ENCODE measurements at regions of chr20 and their contacts with region 1.

Region 1: GRCh38 chr20:58131551-58132142 is 96.8 kb downstream of the ANKRD60 start:
- DNase-seq: no peak
- H3K4me3 ChIP-seq: peak overlapping the region in 1 of 2 donors; percentile 13
- H3K27ac ChIP-seq: peak overlapping the region; percentile 77 to 89
- H3K4me1 ChIP-seq: peaks cover 14 to 68% of the 10 kb centered on the region in 2 donors
- H3K27me3 ChIP-seq: no peaks in the 10 kb centered on the region
- CTCF ChIP-seq: no peak

Region 2: GRCh38 chr20:57425150-57426013 is 706.3 kb before region 1 on chr20:
- intact Hi-C with region 1: no loop called
- DNase-seq: no peak
- H3K4me3 ChIP-seq: no peak overlapping the region
- H3K27ac ChIP-seq: no peak overlapping the region
- H3K4me1 ChIP-seq: peaks cover 0 to 11% of the 10 kb centered on the region in 2 donors
- H3K27me3 ChIP-seq: no peaks in the 10 kb centered on the region
- CTCF ChIP-seq: no peak

Region 3: DNA sequence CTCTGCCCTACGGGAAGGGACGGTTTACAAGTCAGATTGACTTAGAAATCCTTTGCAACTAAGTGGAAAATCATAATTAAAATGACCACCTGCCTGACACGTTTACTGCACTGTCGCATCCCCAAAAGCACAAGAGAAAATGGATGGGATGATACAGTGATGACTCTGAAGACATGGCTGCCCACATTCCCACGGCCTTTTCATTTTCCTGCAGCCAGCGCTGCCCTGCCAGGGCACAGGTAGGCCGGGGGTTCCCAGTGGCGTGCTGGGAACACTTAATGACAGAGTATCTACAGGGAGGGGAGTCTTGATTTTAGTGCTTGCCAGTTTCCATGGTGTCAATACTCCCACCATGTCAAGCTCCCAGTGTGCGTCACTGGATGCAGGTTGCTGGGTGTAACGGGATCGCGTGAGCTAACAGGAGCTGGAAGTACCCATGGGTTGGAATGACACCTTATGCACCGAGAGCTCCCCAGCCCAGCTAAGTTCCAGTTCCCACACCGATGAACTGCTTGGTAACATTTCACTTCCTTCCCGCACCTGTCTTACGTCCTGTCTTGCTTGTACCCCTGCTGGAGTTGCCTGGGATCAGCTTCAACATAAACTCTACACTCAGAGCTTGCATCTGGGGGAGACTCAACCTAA is 32.2 kb before region 1 on chr20:
- intact Hi-C with region 1: no loop called
- DNase-seq: no peak
- H3K4me3 ChIP-seq: no peak overlapping the region
- H3K27ac ChIP-seq: no peak overlapping the region
- H3K4me1 ChIP-seq: no peaks in the 10 kb centered on the region
- H3K27me3 ChIP-seq: no peaks in the 10 kb centered on the region
- CTCF ChIP-seq: no peak

Region 4: GRCh38 chr20:58112017-58112781 is 19.4 kb before region 1 on chr20:
- intact Hi-C with region 1: loop called (anchors 2 kb)
- DNase-seq: no peak
- H3K4me3 ChIP-seq: no peak overlapping the region
- H3K27ac ChIP-seq: peak overlapping the region; percentile 35 to 63
- H3K4me1 ChIP-seq: peaks cover 3 to 14% of the 10 kb centered on the region in 2 donors
- H3K27me3 ChIP-seq: no peaks in the 10 kb centered on the region
- CTCF ChIP-seq: no peak

Region 5: DNA sequence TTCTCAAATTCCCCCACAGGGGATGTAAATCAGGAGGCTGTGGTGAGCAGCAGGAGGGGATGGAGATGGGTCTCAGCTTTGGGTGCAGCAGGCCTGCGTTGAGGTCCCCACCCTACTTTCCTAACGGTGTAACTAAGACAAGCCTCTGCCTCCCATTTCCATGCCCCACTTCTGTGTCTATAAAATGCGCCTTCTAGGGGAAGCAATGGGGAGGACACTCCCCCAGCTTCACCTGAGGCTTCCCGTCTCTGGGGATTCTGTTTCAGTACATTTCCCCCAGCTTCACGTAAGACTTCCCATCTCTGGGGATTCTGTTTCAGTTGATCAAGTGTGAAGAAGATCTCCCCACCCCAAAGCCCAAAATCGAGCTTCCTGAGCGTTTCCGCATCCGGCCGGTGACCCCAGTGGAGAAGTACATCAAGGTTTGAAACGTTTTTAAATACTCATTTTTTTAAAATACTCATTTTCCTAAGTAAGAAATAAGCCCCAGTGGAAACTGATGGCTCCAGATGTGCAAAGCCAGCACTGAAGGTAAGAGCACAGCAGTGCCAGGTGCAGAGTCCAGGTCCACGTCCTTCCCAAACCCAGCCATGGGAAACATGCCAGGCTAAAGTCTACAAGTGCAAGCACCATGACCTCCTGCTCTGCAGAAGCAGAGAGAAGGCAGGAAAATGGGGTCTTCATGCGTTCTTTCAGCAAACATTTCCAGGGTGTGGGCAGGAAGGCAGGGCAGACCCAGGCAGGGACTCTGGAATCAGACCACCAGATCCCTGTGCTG is 23.7 kb after region 1 on chr20:
- intact Hi-C with region 1: no loop called
- DNase-seq: no peak
- H3K4me3 ChIP-seq: no peak overlapping the region
- H3K27ac ChIP-seq: no peak overlapping the region
- H3K4me1 ChIP-seq: no peaks in the 10 kb centered on the region
- H3K27me3 ChIP-seq: no peaks in the 10 kb centered on the region
- CTCF ChIP-seq: no peak

Region 6: DNA sequence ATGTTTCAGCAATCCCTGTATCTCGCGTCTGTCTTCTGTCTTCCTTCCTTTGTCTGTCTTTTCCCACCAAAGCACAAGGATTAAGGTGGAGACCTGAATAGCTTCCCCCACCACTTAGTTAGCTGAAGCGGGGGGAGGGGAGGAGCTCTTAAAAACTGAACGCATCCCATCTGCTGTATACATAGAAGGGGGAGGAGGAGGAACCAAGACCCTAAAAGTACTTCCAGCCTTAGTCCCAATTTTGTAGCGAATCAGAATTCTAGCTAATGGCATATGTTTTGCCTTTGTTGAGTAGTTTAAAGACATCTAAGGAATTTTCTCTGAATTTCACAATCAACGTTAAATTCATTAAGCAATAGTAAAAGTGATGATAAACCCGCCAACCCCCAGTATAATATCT is 768.8 kb after region 1 on chr20:
- intact Hi-C with region 1: loop called (anchors 5 kb)
- DNase-seq: no peak
- H3K4me3 ChIP-seq: no peak overlapping the region
- H3K27ac ChIP-seq: no peak overlapping the region
- H3K4me1 ChIP-seq: peaks cover 4 to 31% of the 10 kb centered on the region in 2 donors
- H3K27me3 ChIP-seq: no peaks in the 10 kb centered on the region
- CTCF ChIP-seq: no peak